Activated B cell treated with CpG ODN at 0.5 μM for 24 hours (primary cell): ENCODE measurements at regions of chr4 and their contacts with region 1.

Region 1: GRCh38 chr4:6709230-6710114 is at the start of gene MRFAP1L1:
- DNase-seq: peak; percentile 93
- ATAC-seq: peak; percentile 84
- H3K4me3 Mint-ChIP-seq: peak within 1 kb of the TSS; percentile 99
- H3K27ac Mint-ChIP-seq: peak within 1 kb of the TSS; percentile 96
- H3K4me1 Mint-ChIP-seq: peaks cover 64% of the 10 kb centered on the region
- H3K27me3 Mint-ChIP-seq: peaks cover 3% of the 10 kb centered on the region
- CTCF ChIP-seq: no peak
- total RNA-seq, gene MRFAP1L1: 39.1 and 39.5 TPM in 2 replicates

Region 2: GRCh38 chr4:6032249-6033244 is 676.9 kb before region 1 on chr4:
- CTCF ChIA-PET with region 1: no interaction called
- POLR2A ChIA-PET with region 1: no interaction called
- intact Hi-C with region 1: no loop called
- DNase-seq: no peak
- ATAC-seq: no peak
- H3K4me3 Mint-ChIP-seq: no peak overlapping the region
- H3K27ac Mint-ChIP-seq: no peak overlapping the region
- H3K4me1 Mint-ChIP-seq: no peaks in the 10 kb centered on the region
- H3K27me3 Mint-ChIP-seq: peaks cover 4% of the 10 kb centered on the region
- CTCF ChIP-seq: no peak

Region 3: DNA sequence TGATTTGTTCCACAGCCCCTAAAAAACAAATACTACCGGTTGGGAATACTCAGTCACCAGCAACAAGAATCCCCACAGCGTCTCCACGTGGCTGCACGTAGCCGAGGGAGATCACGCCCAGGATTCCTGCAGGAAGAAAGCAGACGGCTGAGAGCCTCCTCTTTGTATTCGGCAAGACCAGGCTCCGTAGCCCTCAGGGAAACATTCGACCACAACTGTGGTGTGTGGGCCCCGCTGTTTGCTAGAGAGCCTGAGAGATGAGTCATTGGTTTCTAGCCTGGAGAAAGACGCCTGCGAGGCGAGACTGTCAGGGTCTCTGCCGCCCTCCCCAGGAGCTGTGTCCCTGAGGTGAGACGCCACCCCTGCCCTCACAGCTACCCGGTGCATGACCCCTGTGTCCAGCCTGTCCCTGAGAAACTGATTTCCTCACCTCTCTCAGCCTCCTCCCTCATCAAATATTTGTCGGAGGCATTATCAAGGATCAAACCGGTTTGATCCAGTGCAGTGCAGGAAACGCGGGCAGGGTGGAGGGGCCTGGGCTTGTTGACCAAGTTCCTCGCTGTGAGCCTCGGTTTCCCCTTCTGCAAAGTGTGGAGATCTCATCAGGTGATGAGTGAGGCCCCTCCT is 20.5 kb before region 1 on chr4:
- CTCF ChIA-PET with region 1: no interaction called
- POLR2A ChIA-PET with region 1: no interaction called
- intact Hi-C with region 1: no loop called
- DNase-seq: no peak
- ATAC-seq: peak; percentile 56
- H3K4me3 Mint-ChIP-seq: no peak overlapping the region
- H3K27ac Mint-ChIP-seq: no peak overlapping the region
- H3K4me1 Mint-ChIP-seq: no peaks in the 10 kb centered on the region
- H3K27me3 Mint-ChIP-seq: peaks cover 7% of the 10 kb centered on the region
- CTCF ChIP-seq: no peak

Region 4: DNA sequence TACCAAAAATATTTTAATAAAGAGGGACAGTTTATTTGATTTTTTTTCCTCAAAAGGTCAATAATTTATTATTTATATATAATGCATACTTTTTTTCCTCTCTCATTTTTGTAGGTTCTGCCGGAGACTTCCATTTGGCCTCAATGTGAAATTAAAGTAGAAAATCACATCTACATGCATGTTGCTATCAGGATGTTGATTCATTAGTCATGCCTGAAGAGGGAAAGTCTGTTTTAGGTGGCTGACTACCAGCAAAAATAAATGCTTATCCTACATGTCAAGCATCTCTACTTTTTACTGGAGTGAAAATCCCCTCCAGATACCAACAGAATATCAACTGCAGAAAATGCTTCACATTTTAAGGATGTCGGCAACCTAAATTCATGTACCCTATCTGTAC is 114.6 kb after region 1 on chr4:
- CTCF ChIA-PET with region 1: no interaction called
- POLR2A ChIA-PET with region 1: no interaction called
- intact Hi-C with region 1: no loop called
- DNase-seq: no peak
- ATAC-seq: no peak
- H3K4me3 Mint-ChIP-seq: no peak overlapping the region
- H3K27ac Mint-ChIP-seq: no peak overlapping the region
- H3K4me1 Mint-ChIP-seq: peaks cover 7% of the 10 kb centered on the region
- H3K27me3 Mint-ChIP-seq: no peaks in the 10 kb centered on the region
- CTCF ChIP-seq: no peak

Region 5: GRCh38 chr4:6909073-6909965 is 199.8 kb after region 1 on chr4 and contains the start of gene TBC1D14:
- CTCF ChIA-PET with region 1: interaction called, 3 read pairs
- POLR2A ChIA-PET with region 1: interaction called, 14 read pairs
- intact Hi-C with region 1: loop called (anchors 1 kb)
- DNase-seq: peak; percentile 88
- ATAC-seq: peak; percentile 89
- H3K4me3 Mint-ChIP-seq: peak within 1 kb of the TSS; percentile 87
- H3K27ac Mint-ChIP-seq: peak within 1 kb of the TSS; percentile 86
- H3K4me1 Mint-ChIP-seq: peaks cover 43% of the 10 kb centered on the region
- H3K27me3 Mint-ChIP-seq: peaks cover 5% of the 10 kb centered on the region
- CTCF ChIP-seq: no peak
- total RNA-seq, gene TBC1D14: 35.1 and 35.2 TPM in 2 replicates